CD4-positive, alpha-beta T cell (primary cell): ENCODE measurements at regions of chr19 and their contacts with region 1.

Region 1: GRCh38 chr19:9848060-9848459 is 12.9 kb downstream of the PIN1 start:
- DNase-seq: peak in 13 of 14 experiments; percentile 27 to 73 (median 50)
- ATAC-seq: peak; percentile 68
- H3K4me3 ChIP-seq: no peak overlapping the region
- H3K4me3 Mint-ChIP-seq: no peak overlapping the region
- H3K27ac ChIP-seq: no peak overlapping the region
- H3K27ac Mint-ChIP-seq: no peak overlapping the region
- H3K4me1 ChIP-seq: peaks cover 25% of the 10 kb centered on the region
- H3K4me1 Mint-ChIP-seq: peaks cover 34% of the 10 kb centered on the region
- H3K27me3 ChIP-seq: no peaks in the 10 kb centered on the region
- H3K27me3 Mint-ChIP-seq: no peaks in the 10 kb centered on the region
- CTCF ChIP-seq: peak; percentile 71

Region 2: GRCh38 chr19:9865732-9866501 is 17.9 kb after region 1 on chr19:
- CTCF ChIA-PET with region 1: no interaction called
- POLR2A ChIA-PET with region 1: no interaction called
- intact Hi-C with region 1: loop called in 1 of 2 experiments (anchors 2 kb)
- DNase-seq: peak in 12 of 14 experiments; percentile 26 to 84 (median 49)
- ATAC-seq: peak; percentile 78
- H3K4me3 ChIP-seq: no peak overlapping the region
- H3K4me3 Mint-ChIP-seq: peak overlapping the region; percentile 70
- H3K27ac ChIP-seq: no peak overlapping the region
- H3K27ac Mint-ChIP-seq: peak overlapping the region; percentile 90
- H3K4me1 ChIP-seq: peaks cover 66% of the 10 kb centered on the region
- H3K4me1 Mint-ChIP-seq: peaks cover 56% of the 10 kb centered on the region
- H3K27me3 ChIP-seq: no peaks in the 10 kb centered on the region
- H3K27me3 Mint-ChIP-seq: no peaks in the 10 kb centered on the region
- CTCF ChIP-seq: no peak

Region 3: DNA sequence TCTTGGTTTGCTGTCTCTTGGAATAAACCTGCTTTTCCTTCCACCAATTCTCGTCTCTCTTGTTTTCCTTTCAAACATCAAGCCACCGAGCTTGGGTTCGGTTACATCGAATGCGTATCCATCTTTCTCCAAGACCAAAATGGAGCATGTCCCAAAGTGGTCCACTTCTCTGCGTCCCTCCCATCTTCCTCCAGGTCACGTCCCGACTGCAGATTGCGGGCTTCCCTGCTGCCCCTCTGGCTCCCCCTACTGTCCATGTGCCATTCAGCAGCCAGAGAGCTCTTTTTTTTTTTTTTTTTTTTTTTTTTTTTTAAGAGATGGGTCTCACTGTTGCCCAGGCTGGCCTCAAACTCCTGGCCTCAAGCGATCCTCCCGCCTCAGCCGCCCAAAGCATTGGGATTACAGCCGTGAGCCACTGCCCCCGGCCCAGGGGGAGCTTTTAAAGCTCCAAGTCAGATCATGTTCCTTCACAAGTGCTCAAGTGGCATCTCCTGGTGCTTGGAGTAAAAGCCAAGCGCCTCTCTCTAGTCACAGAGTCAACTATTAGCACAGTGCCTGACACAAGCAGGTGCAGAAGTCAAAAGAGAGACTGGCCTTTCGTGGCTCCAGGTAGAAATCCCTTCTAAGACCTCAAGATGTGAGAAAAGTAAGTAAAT is 152.2 kb after region 1 on chr19:
- CTCF ChIA-PET with region 1: no interaction called
- POLR2A ChIA-PET with region 1: no interaction called
- intact Hi-C with region 1: loop called in 1 of 2 experiments (anchors 5 kb)
- DNase-seq: peak; percentile 45 to 84 (median 56)
- ATAC-seq: peak; percentile 43
- H3K4me3 ChIP-seq: no peak overlapping the region
- H3K4me3 Mint-ChIP-seq: no peak overlapping the region
- H3K27ac ChIP-seq: no peak overlapping the region
- H3K27ac Mint-ChIP-seq: no peak overlapping the region
- H3K4me1 ChIP-seq: peaks cover 29% of the 10 kb centered on the region
- H3K4me1 Mint-ChIP-seq: peaks cover 5% of the 10 kb centered on the region
- H3K27me3 ChIP-seq: peaks cover 9 to 11% of the 10 kb centered on the region in 2 experiments
- H3K27me3 Mint-ChIP-seq: peaks cover 38% of the 10 kb centered on the region
- CTCF ChIP-seq: peak; percentile 75